CD14-positive monocyte (primary cell): ENCODE measurements at regions of chr10 and their contacts with region 1.

Region 1: GRCh38 chr10:101141616-101142532 is 10.8 kb downstream of the TLX1 start:
- DNase-seq: peak; percentile 74 to 83 (median 79)
- H3K4me3 ChIP-seq: no peak overlapping the region
- H3K4me3 Mint-ChIP-seq: peak overlapping the region in 1 of 2 donors; percentile 84
- H3K27ac ChIP-seq: no peak overlapping the region
- H3K27ac Mint-ChIP-seq: no peak overlapping the region
- H3K4me1 ChIP-seq: peaks cover 0 to 5% of the 10 kb centered on the region in 2 donors
- H3K4me1 Mint-ChIP-seq: peaks cover 17% of the 10 kb centered on the region
- H3K27me3 ChIP-seq: peaks cover 91 to 100% of the 10 kb centered on the region in 2 donors
- H3K27me3 Mint-ChIP-seq: peaks cover 96 to 100% (median 100%) of the 10 kb centered on the region in 3 donors
- CTCF ChIP-seq: peak; percentile 94

Region 2: GRCh38 chr10:101042667-101043355 is 99.1 kb before region 1 on chr10:
- intact Hi-C with region 1: loop called in 1 of 2 experiments (anchors 5 kb)
- DNase-seq: peak; percentile 92 to 97 (median 93)
- H3K4me3 ChIP-seq: peak overlapping the region; percentile 47 to 87 (median 60)
- H3K4me3 Mint-ChIP-seq: peak overlapping the region; percentile 96 to 99
- H3K27ac ChIP-seq: peak overlapping the region; percentile 80 to 83
- H3K27ac Mint-ChIP-seq: peak overlapping the region; percentile 96 to 100 (median 99)
- H3K4me1 ChIP-seq: peaks cover 14 to 22% of the 10 kb centered on the region in 2 donors
- H3K4me1 Mint-ChIP-seq: peaks cover 23% of the 10 kb centered on the region
- H3K27me3 ChIP-seq: peaks cover 15 to 29% of the 10 kb centered on the region in 2 donors
- H3K27me3 Mint-ChIP-seq: peaks cover 25 to 27% (median 26%) of the 10 kb centered on the region in 3 donors
- CTCF ChIP-seq: no peak

Region 3: GRCh38 chr10:101050208-101051069 is 91.4 kb before region 1 on chr10:
- intact Hi-C with region 1: loop called in 1 of 2 experiments (anchors 5 kb)
- DNase-seq: peak; percentile 42 to 53 (median 52)
- H3K4me3 ChIP-seq: no peak overlapping the region
- H3K4me3 Mint-ChIP-seq: peak overlapping the region in 1 of 2 donors; percentile 85
- H3K27ac ChIP-seq: no peak overlapping the region
- H3K27ac Mint-ChIP-seq: peak overlapping the region in 1 of 7 donors; percentile 68
- H3K4me1 ChIP-seq: peaks cover 8 to 17% of the 10 kb centered on the region in 2 donors
- H3K4me1 Mint-ChIP-seq: peaks cover 20% of the 10 kb centered on the region
- H3K27me3 ChIP-seq: peaks cover 36 to 59% of the 10 kb centered on the region in 2 donors
- H3K27me3 Mint-ChIP-seq: peaks cover 56 to 60% (median 57%) of the 10 kb centered on the region in 3 donors
- CTCF ChIP-seq: peak; percentile 86

Region 4: DNA sequence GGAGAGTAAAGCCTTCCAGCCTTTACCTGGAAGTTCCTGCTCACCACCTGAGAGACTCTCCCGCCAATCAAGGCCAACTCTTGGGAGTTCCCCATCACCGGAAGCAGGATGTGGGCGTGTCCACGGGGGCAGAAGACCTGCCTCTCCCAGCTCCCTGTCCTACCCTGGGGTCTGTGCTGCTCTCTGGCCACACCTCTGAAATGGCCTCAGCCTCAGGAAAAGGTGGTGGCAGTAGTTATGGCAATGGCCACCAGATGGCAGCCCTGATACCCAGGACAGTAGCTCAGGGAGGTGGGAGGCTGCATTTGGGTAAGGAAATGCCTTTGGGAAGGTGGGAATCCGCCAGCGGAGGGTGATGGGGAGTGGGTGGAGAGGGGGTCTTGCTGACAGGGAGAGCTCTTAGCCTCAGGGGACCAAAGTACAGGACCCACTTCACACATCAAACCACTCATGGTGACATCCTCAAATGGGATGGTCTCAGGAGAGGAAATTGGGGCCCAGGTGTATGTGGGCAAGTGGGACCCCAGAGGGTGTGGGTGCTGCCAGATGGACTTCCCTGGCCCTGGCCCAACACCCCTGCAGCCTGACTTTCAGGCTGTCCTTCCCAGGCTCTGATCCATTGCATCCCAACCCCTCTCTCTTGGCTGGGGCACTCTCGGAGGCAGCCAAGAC is 46.2 kb before region 1 on chr10:
- intact Hi-C with region 1: loop called (anchors 5 kb)
- DNase-seq: peak; percentile 41 to 57 (median 55)
- H3K4me3 ChIP-seq: no peak overlapping the region
- H3K4me3 Mint-ChIP-seq: no peak overlapping the region
- H3K27ac ChIP-seq: no peak overlapping the region
- H3K27ac Mint-ChIP-seq: no peak overlapping the region
- H3K4me1 ChIP-seq: no peaks in the 10 kb centered on the region
- H3K4me1 Mint-ChIP-seq: no peaks in the 10 kb centered on the region
- H3K27me3 ChIP-seq: peaks cover 0 to 44% of the 10 kb centered on the region in 2 donors
- H3K27me3 Mint-ChIP-seq: peaks cover 37 to 70% (median 39%) of the 10 kb centered on the region in 3 donors
- CTCF ChIP-seq: peak; percentile 89

Region 5: DNA sequence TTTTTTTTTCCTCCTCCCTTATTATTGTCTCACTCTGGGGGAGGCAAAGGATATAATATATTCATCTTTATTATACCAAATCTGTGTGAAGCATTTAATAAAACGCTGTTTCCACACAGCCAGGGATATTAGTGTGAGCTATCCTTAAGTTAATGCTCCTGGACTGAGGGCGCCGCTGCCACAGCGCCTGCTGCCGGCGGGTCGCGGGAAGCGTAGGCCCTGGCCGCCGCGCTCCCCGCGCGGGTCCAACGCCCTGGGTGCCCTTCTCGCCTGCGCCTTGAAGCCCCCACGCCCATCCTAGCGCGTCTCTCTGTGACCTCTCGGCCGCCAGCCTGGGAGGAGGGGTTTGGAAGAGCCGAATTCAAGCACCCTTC is 96.8 kb after region 1 on chr10:
- intact Hi-C with region 1: no loop called
- DNase-seq: no peak
- H3K4me3 ChIP-seq: no peak overlapping the region
- H3K4me3 Mint-ChIP-seq: peak overlapping the region in 1 of 2 donors; percentile 61
- H3K27ac ChIP-seq: no peak overlapping the region
- H3K27ac Mint-ChIP-seq: no peak overlapping the region
- H3K4me1 ChIP-seq: peaks cover 0 to 5% of the 10 kb centered on the region in 2 donors
- H3K4me1 Mint-ChIP-seq: peaks cover 12% of the 10 kb centered on the region
- H3K27me3 ChIP-seq: peaks cover 68 to 81% of the 10 kb centered on the region in 2 donors
- H3K27me3 Mint-ChIP-seq: peaks cover 76 to 93% (median 82%) of the 10 kb centered on the region in 3 donors
- CTCF ChIP-seq: peak; percentile 73

Region 6: DNA sequence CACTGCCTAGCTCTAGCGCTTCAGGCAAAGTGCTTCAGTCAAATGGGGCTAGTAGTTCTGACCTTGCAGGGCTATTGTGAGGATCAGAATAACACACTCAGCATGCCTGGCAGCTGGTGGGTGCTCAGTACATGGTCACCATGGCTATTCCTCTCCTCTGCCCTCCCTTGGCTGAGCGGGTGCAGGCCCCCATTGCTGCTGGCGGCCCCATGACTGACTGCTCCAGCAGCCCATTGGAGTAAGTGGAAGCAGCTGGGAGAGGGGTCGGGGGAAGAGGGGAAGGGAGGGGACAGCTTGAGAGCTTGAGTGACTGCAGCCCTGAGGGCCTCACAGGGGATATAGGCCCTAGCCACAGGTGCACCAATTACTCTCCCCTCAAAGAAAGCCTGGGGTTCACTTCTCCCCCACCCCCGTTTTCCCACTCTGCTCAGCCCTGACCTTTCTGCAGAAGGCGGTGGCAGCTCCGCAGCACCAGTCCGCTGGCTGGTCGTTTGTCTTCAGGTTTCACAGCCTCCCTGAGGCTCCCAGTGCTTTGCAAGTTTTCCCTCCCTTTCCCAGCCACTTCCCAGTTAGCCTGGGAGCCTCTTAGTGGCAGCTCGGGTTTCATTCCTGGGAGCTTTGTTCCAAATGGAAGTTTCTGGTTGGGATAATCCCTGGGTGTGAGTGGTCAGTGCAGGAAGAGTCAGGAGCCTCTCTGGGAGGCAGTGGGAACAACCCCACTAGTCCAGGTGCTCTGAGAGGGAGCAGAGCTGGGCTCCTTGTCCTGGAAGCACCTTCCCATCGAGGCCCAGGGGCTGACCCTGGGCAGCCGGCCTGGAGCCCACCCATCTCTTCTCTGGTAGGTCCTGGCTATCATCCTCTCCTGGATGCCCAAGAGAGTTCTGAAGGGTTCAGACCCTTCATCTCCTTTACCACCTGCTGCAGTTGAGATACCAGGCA is 617.7 kb after region 1 on chr10:
- intact Hi-C with region 1: no loop called
- DNase-seq: no peak
- H3K4me3 ChIP-seq: no peak overlapping the region
- H3K4me3 Mint-ChIP-seq: no peak overlapping the region
- H3K27ac ChIP-seq: no peak overlapping the region
- H3K27ac Mint-ChIP-seq: no peak overlapping the region
- H3K4me1 ChIP-seq: no peaks in the 10 kb centered on the region
- H3K4me1 Mint-ChIP-seq: no peaks in the 10 kb centered on the region
- H3K27me3 ChIP-seq: no peaks in the 10 kb centered on the region
- H3K27me3 Mint-ChIP-seq: peaks cover 8 to 35% (median 19%) of the 10 kb centered on the region in 3 donors
- CTCF ChIP-seq: no peak